ENCODE measurements at regions of chr16 and their contacts with region 1.

Region 1: DNA sequence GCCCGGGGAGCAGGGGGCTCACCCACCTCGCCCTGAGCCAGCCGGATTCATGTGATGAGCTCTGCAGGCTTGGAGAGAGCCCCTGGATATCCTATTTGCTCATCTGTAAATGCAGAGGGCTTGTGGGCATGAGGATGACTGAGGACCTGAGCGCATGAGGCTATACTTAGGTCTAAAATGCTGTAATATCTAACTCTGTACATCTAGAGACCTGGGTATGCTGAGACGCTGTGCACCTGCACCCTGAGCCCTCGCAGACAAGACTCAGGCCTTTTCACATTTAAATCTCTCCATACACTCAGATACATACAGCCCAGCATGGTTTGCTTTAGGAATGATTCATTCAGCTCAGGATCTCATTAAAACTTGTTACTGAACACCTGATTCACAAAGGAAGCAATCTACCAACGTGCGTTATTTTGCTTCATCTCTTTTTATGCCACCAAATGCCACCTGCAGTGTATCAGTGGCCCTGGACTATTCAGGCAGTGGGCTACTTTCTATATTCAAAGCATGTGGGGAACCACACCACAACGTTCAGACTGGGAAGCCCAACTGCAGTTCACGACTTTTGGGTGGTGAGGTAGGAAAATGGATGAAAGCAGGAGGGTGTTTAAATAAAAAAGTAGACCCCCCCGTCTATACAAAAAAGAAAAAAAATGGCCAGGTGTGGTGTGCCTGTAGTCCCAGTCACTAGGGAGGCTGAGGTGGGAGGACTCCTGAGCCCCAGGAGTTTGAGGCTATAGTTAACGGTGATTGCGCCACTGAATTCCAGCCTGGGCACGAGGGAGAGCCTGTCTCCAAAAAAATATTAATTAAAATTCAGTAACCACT is 12.0 kb downstream of the USP7 start:
- DNase-seq: peak; percentile 51
- ATAC-seq: peak; percentile 74
- H3K4me3 ChIP-seq: peak overlapping the region in 1 of 5 experiments; percentile 6
- H3K4me3 Mint-ChIP-seq: peak overlapping the region; percentile 51
- H3K27ac ChIP-seq: no peak overlapping the region
- H3K27ac Mint-ChIP-seq: no peak overlapping the region
- H3K4me1 ChIP-seq: peaks cover 82 to 92% of the 10 kb centered on the region in 2 donors
- H3K4me1 Mint-ChIP-seq: peaks cover 79% of the 10 kb centered on the region
- H3K27me3 ChIP-seq: no peaks in the 10 kb centered on the region
- H3K27me3 Mint-ChIP-seq: no peaks in the 10 kb centered on the region
- CTCF ChIP-seq: no peak

Region 2: GRCh38 chr16:8850279-8850885 is 101.3 kb before region 1 on chr16:
- CTCF ChIA-PET with region 1: no interaction called
- POLR2A ChIA-PET with region 1: no interaction called
- intact Hi-C with region 1: no loop called
- DNase-seq: no peak
- ATAC-seq: no peak
- H3K4me3 ChIP-seq: no peak overlapping the region
- H3K4me3 Mint-ChIP-seq: no peak overlapping the region
- H3K27ac ChIP-seq: peak overlapping the region in 1 of 2 donors; percentile 2
- H3K27ac Mint-ChIP-seq: peak overlapping the region; percentile 76
- H3K4me1 ChIP-seq: peaks cover 7 to 9% of the 10 kb centered on the region in 2 donors
- H3K4me1 Mint-ChIP-seq: peaks cover 16% of the 10 kb centered on the region
- H3K27me3 ChIP-seq: no peaks in the 10 kb centered on the region
- H3K27me3 Mint-ChIP-seq: no peaks in the 10 kb centered on the region
- CTCF ChIP-seq: no peak

Region 3: DNA sequence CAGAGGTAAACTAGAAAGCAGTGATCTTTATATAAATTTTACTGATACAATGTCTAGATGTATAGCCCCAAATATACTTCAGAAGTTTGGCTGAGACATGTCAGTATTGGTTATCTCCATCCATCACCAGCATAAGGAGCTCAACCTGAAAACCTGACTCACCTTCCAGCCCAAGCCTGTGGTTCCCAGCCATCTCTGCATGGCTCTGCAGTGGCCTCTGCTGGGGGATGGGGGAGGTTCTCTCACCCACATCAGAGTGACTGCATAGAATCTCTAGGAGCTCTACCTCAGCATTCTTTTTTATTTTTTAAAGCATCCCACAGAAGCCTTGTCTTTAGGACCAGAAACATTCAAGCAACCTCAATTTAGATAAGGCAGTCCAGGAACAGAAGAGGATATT is 15.2 kb before region 1 on chr16:
- CTCF ChIA-PET with region 1: interaction called, 15 read pairs
- POLR2A ChIA-PET with region 1: no interaction called
- intact Hi-C with region 1: no loop called
- DNase-seq: peak; percentile 69
- ATAC-seq: peak; percentile 89
- H3K4me3 ChIP-seq: no peak overlapping the region
- H3K4me3 Mint-ChIP-seq: no peak overlapping the region
- H3K27ac ChIP-seq: no peak overlapping the region
- H3K27ac Mint-ChIP-seq: peak overlapping the region; percentile 7
- H3K4me1 ChIP-seq: peaks cover 58 to 63% of the 10 kb centered on the region in 2 donors
- H3K4me1 Mint-ChIP-seq: peaks cover 81% of the 10 kb centered on the region
- H3K27me3 ChIP-seq: no peaks in the 10 kb centered on the region
- H3K27me3 Mint-ChIP-seq: no peaks in the 10 kb centered on the region
- CTCF ChIP-seq: peak; percentile 73

Region 4: DNA sequence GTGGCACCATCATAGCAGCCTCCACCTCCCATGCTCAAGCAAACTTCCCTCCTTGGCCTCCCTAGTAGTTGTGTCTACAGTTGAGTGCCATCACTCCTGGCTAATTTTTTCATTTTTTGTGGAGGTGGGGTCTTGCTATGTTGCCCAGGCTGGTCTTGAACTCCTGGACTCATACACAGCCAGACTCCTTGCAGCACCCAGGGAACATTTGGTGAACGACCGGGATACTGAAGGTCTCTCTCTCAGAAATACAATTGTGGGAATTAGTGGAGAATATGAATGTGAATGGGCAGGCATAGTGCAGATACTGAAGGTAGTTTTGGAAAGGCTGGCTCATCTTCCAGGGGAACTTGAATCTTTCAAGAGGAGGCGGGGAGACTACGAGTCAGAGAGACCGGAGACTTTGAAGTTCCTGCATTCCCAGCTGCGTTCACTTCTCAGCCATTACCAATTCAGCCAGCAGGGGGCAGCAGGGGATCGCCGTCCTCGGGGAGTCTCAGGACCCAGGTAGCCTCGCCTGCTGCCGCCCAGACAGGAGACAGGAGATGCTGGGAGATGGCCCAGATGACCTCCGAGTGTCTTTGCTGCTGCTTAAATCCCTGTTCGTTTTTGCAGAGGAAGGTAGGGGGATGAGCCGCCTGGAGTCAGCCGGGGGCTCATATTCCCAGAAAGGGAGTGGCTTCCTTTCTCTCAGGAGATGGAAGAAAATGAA is 208.3 kb after region 1 on chr16:
- CTCF ChIA-PET with region 1: no interaction called
- POLR2A ChIA-PET with region 1: no interaction called
- intact Hi-C with region 1: no loop called
- DNase-seq: peak; percentile 22
- ATAC-seq: no peak
- H3K4me3 ChIP-seq: no peak overlapping the region
- H3K4me3 Mint-ChIP-seq: no peak overlapping the region
- H3K27ac ChIP-seq: no peak overlapping the region
- H3K27ac Mint-ChIP-seq: no peak overlapping the region
- H3K4me1 ChIP-seq: peaks cover 0 to 5% of the 10 kb centered on the region in 2 donors
- H3K4me1 Mint-ChIP-seq: peaks cover 3% of the 10 kb centered on the region
- H3K27me3 ChIP-seq: peaks cover 0 to 10% (median 5%) of the 10 kb centered on the region in 4 experiments
- H3K27me3 Mint-ChIP-seq: peaks cover 28% of the 10 kb centered on the region
- CTCF ChIP-seq: no peak

Measured in B cell (primary cell).